ENCODE measurements at regions of chr2 and their contacts with region 1.

Region 1: GRCh38 chr2:54723131-54723995 is at the start of gene EML6:
- DNase-seq: peak; percentile 99
- H3K4me3 ChIP-seq: peak within 1 kb of the TSS; percentile 86 to 99 (median 96)
- H3K27ac ChIP-seq: peak within 1 kb of the TSS; percentile 78
- H3K4me1 ChIP-seq: peaks cover 22% of the 10 kb centered on the region
- H3K27me3 ChIP-seq: peaks cover 11 to 15% of the 10 kb centered on the region in 2 experiments
- CTCF ChIP-seq: peak; percentile 4 to 36
- POLR2A ChIP-seq: peak; percentile 88
- total RNA-seq, gene EML6: 1.3 and 2.1 TPM in 2 replicates

Region 2: GRCh38 chr2:54115284-54116137 is 607.9 kb before region 1 on chr2 and contains the start of gene ACYP2:
- CTCF ChIA-PET with region 1: no interaction called
- POLR2A ChIA-PET with region 1: no interaction called
- dilution Hi-C with region 1: no loop called
- intact Hi-C with region 1: loop called (anchors 5 kb)
- DNase-seq: peak; percentile 92
- H3K4me3 ChIP-seq: peak within 1 kb of the TSS; percentile 53 to 91 (median 74)
- H3K27ac ChIP-seq: peak within 1 kb of the TSS; percentile 93
- H3K4me1 ChIP-seq: peaks cover 6% of the 10 kb centered on the region
- H3K27me3 ChIP-seq: no peaks in the 10 kb centered on the region
- CTCF ChIP-seq: peak in 1 of 2 donors; percentile 25
- POLR2A ChIP-seq: no peak
- total RNA-seq, gene ACYP2: 5.8 and 7.9 TPM in 2 replicates

Region 3: DNA sequence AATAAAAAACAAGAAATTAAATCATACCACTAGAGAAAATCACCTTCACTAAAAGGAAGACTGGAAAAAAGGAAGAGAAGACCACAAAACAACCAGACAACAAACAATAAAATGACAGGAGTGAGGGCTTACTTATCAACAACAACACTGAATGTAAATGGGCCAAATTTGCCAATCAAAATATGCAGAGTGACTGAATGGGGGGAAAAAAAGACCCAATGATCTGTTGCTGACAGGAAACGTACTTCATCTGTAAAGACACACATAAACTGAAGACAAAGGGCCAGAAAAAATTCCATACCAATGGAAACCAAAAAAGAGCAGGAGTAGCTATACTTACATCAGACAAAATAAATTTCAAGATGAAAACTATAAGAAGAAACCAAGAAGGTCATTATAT is 25.4 kb before region 1 on chr2:
- CTCF ChIA-PET with region 1: no interaction called
- POLR2A ChIA-PET with region 1: no interaction called
- dilution Hi-C with region 1: no loop called
- intact Hi-C with region 1: no loop called
- DNase-seq: no peak
- H3K4me3 ChIP-seq: no peak overlapping the region
- H3K27ac ChIP-seq: no peak overlapping the region
- H3K4me1 ChIP-seq: no peaks in the 10 kb centered on the region
- H3K27me3 ChIP-seq: no peaks in the 10 kb centered on the region
- CTCF ChIP-seq: no peak
- POLR2A ChIP-seq: no peak

Region 4: DNA sequence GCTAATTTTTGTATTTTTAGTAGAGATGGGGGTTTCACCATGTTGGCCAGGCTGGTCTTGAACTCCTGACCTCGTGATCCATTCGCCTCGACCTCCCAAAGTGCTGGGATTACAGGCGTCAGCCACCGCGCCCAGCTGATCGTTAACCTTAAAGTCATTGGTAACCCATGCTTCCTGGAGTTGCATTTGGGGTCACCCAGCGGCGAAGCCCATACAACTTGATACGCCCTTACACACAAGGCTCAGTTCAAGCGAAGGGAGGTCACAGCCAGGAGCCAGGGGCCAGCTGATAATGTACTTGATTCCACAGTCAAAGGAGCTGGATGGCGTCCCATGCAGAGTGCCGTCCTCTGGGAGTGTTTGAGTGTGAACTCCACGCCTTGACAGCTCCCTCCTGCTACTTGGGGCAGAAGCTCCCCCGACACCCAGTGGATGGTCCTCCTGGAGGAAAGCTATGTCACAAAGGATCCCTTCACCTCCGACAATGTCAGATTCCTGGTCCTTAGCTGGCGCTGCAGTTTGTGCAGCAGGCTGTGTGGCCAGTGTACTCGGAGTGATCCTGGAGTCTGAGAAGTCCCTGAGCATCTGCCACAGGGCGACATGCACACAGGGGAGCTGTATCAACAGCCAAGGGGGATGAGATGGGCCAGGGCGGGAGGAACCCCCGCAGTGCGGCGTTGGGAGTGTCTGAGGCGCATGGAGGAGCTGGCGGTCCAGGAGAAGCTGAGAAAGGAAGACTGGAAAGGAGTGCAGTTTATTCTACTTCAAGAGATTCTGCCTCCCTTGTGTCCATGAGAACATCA is 500.8 kb after region 1 on chr2:
- CTCF ChIA-PET with region 1: no interaction called
- POLR2A ChIA-PET with region 1: no interaction called
- dilution Hi-C with region 1: no loop called
- intact Hi-C with region 1: loop called (anchors 2 kb)
- DNase-seq: no peak
- H3K4me3 ChIP-seq: no peak overlapping the region
- H3K27ac ChIP-seq: no peak overlapping the region
- H3K4me1 ChIP-seq: peaks cover 14% of the 10 kb centered on the region
- H3K27me3 ChIP-seq: no peaks in the 10 kb centered on the region
- CTCF ChIP-seq: no peak
- POLR2A ChIP-seq: no peak

Measured in endothelial cell of umbilical vein (primary cell).